A673 (cell line): ENCODE measurements at regions of chr13 and their contacts with region 1.

Region 1: DNA sequence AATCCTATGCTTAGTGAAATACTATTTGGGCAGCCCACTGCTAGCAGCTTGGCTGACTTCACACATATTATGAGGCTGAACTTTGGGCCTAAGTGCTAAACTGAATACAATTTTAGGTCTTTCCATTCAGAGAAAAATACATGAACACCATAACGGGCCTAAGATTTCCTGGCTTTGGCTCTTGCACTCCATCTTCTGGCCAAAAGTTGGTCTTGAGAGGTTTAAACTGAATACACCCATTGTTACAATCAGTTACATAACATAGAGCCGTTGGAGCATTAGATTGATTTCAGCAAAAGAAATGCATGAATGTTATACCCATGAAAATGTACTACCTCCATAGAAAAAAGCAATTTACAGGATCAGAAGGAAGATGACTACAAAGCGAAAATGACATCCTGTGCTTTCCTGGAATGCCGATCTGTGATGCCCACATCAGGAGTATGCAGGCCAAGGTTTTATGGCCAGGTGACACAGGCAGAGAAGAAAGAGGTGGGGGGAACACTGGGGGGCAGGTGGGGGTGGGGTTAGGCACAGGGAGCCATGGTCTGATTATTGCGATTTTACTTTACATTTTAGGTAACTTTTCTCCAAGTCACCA is 11.1 kb upstream of the SHISA2 start:
- DNase-seq: peak; percentile 71
- H3K4me3 ChIP-seq: no peak overlapping the region
- H3K27ac ChIP-seq: no peak overlapping the region
- H3K4me1 ChIP-seq: no peaks in the 10 kb centered on the region
- H3K27me3 ChIP-seq: no peaks in the 10 kb centered on the region
- CTCF ChIP-seq: peak; percentile 77

Region 2: GRCh38 chr13:25827831-25828465 is 235.0 kb before region 1 on chr13:
- CTCF ChIA-PET with region 1: interaction called, 4 read pairs
- POLR2A ChIA-PET with region 1: no interaction called
- intact Hi-C with region 1: loop called (anchors 2 kb)
- DNase-seq: no peak
- H3K4me3 ChIP-seq: no peak overlapping the region
- H3K27ac ChIP-seq: no peak overlapping the region
- H3K4me1 ChIP-seq: no peaks in the 10 kb centered on the region
- H3K27me3 ChIP-seq: no peaks in the 10 kb centered on the region
- CTCF ChIP-seq: no peak

Region 3: GRCh38 chr13:26011996-26012821 is 50.7 kb before region 1 on chr13:
- CTCF ChIA-PET with region 1: no interaction called
- POLR2A ChIA-PET with region 1: no interaction called
- intact Hi-C with region 1: no loop called
- DNase-seq: peak; percentile 25
- H3K4me3 ChIP-seq: peak overlapping the region; percentile 15
- H3K27ac ChIP-seq: no peak overlapping the region
- H3K4me1 ChIP-seq: peaks cover 22% of the 10 kb centered on the region
- H3K27me3 ChIP-seq: no peaks in the 10 kb centered on the region
- CTCF ChIP-seq: no peak